Esophagus muscularis mucosa (tissue), 4 donors: ENCODE measurements at regions of chr13 and their contacts with region 1.

Region 1: DNA sequence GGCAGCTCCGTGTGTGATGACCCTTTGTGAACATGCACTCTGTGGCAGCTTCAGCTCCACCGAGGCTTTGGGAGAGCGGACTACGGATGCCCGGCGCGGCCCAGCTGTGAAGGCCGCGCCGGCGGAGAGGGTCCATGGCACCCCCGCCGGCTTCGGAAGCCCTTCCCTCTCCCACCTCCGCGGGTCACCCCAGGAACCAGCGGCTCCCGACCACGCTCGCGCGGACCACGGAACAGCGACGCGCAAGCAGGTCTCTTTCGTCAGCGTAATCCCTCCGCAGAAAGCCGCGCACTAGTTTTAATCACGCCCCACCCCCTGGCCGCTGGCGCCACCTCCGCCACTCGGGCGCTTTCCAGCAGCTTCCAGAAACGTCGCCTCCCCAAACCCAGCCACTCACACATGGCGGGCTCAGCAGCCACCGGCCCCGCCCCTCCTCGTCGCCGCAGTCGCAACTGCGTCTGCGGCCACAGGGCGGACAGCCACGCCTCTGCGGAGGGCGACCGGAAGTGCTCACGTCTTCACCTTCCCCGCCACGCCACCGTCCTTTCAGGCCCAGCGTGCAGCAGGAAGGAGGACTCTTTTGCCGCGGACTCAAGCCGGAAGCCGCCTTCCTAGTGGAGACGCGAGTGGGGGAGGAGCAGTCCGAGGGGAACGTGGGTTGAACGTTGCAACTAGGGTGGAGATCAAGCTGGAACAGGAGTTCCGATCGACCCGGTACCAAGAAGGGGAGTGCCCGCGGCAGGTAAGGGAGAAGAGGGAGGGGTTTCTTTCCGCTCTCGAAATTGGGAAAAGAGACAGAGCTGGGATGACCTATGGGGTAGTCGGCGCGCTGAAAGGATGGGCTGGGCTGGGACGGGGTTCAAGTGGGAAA is at the start of gene USPL1:
- DNase-seq: peak; percentile 99
- H3K4me3 ChIP-seq: peak within 1 kb of the TSS; percentile 78 to 95 (median 90)
- H3K27ac ChIP-seq: peak within 1 kb of the TSS; percentile 97 to 100 (median 99)
- H3K4me1 ChIP-seq: peaks cover 15 to 40% (median 39%) of the 10 kb centered on the region in 4 donors
- H3K27me3 ChIP-seq: no peaks in the 10 kb centered on the region
- CTCF ChIP-seq: peak in 2 of 3 experiments; percentile 38 to 45
- EP300 ChIP-seq: peak; percentile 23
- POLR2A ChIP-seq: peak; percentile 92
- total RNA-seq, gene USPL1: 13.2 to 21.6 (median 19.4) TPM

Region 2: DNA sequence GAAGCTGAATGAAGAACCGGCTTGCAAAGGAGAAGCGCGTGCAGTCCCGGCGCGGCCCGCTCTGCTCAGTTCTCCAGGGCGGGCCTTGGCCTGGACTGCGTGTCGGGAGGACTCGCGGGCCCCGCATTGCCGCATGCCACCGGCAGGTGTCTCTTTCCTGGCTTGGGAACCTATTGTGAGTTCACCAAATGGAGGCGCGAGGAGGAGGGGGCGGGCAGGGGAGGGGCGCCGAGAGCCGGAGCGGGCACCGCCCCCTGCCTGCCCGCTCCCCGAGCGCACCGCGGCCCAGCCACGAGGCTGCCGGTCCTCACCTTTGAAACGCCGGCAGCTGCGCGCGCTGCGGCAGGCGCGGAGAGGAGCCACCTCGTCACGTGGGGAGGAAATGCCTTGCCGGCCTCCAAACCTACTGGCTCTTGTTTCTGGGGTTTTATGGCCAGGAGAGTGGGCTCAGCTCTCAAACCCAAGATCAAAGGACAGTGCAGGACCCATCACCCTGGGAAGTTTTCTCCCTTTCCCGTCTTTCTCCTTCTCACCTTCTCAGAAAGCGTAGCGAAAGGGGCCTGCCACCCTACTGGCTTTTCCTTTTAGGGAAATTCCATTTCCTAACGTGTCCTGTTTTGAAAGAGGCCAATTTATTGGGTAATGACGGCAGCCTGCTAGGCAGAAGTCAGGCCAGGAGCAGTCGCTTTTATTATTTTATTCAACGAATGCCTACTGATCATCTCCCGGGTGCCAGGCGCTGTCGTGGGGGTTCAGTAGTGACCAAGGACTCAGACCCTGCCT is 209.0 kb before region 1 on chr13:
- intact Hi-C with region 1: loop called (anchors 5 kb)
- DNase-seq: peak; percentile 98
- H3K4me3 ChIP-seq: peak overlapping the region; percentile 48 to 52 (median 50)
- H3K27ac ChIP-seq: peak overlapping the region; percentile 81 to 91 (median 86)
- H3K4me1 ChIP-seq: peaks cover 11 to 49% (median 36%) of the 10 kb centered on the region in 4 donors
- H3K27me3 ChIP-seq: no peaks in the 10 kb centered on the region
- CTCF ChIP-seq: peak; percentile 85 to 96 (median 96)
- EP300 ChIP-seq: no peak
- POLR2A ChIP-seq: no peak

Region 3: DNA sequence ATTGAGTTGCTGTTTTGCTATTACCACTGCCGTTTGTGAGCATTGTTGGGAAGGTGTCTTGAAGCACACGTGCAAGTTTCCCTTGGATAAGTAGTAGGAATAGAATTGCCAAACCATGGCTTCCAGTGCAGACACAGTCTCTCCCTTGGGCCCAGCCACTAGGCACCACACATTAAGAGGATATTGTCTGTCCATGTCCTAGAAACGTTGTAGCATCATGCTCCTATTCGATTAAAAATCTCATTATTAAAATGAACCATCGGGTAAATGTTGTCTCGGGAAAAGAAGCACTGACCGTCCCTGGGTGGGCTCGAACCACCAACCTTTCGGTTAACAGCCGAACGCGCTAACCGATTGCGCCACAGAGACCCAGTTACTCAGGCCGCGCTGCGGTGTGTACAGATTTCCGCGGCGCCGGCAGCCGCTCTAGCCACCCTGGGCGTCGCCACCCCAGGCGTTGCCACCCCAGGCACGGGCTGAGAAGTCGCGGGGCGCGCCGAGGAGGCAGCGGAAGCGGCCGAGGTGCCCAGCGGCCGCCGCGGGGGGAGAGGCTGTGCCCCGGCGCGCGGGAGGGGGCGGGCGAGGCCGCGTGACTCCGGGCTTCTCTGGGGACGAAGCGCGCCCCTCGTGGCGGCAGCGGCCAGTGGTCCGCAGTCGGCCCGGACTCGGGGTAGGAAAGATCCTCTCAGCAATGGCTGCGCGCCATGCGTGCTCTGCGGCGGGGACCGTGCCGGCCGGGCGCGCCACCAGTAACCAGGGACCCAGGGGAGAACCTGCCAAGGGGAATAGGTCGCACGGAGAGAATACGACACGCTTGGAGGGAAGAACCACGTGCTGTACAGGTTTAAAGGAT is 56.3 kb after region 1 on chr13:
- intact Hi-C with region 1: loop called (anchors 5 kb)
- DNase-seq: peak; percentile 96
- H3K4me3 ChIP-seq: peak overlapping the region; percentile 56 to 64 (median 62)
- H3K27ac ChIP-seq: peak overlapping the region; percentile 83 to 87 (median 84)
- H3K4me1 ChIP-seq: peaks cover 0 to 14% (median 11%) of the 10 kb centered on the region in 4 donors
- H3K27me3 ChIP-seq: no peaks in the 10 kb centered on the region
- CTCF ChIP-seq: peak; percentile 65 to 84 (median 72)
- EP300 ChIP-seq: no peak
- POLR2A ChIP-seq: no peak